HEK293 (cell line): ENCODE measurements at regions of chr12 and their contacts with region 1.

Region 1: GRCh38 chr12:55194382-55194781 is 26.4 kb upstream of the OR10A7 start:
- H3K4me3 ChIP-seq: no peak overlapping the region
- H3K27ac ChIP-seq: no peak overlapping the region
- H3K4me1 ChIP-seq: no peaks in the 10 kb centered on the region
- CTCF ChIP-seq: no peak

Region 2: GRCh38 chr12:55619354-55620138 is 425.2 kb after region 1 on chr12:
- CTCF ChIA-PET with region 1: interaction called, 38 read pairs
- POLR2A ChIA-PET with region 1: no interaction called
- H3K4me3 ChIP-seq: no peak overlapping the region
- H3K27ac ChIP-seq: no peak overlapping the region
- H3K4me1 ChIP-seq: no peaks in the 10 kb centered on the region
- CTCF ChIP-seq: peak; percentile 77